A549 (cell line): ENCODE measurements at regions of chr17 and their contacts with region 1.

Region 1: DNA sequence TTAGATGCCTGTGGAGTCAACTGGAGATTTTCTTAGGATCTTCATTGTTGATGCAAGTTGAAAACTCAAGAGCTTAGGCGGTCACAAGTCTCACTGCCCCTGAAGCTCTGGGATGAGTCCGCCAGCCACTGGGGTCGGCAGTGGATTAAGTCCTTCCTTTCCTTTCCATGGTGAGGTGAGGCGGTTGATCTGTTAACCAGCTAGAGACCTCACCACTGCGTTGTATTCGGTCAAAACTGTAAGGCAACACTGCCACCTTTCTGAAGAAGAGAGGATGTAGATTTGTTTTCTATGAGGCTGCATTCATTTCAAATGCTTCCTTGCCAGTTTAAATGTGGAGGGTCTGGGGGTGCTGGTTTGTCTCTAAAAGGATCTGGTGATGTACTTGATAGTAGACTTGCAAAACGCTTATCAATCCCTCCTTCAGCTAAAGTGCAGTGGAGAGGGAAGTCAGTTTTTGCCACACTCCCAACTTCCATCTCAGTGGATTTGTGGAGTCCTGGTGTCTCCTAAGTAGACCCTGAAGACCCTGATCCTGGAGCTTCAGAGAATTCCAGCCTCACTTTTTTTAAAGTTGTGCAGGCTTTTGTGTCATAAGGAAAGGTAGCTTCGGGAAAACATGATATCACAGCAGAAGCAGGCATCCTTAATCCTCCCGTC is 1.7 kb downstream of the MYOCD start:
- DNase-seq: peak; percentile 70 to 90
- ATAC-seq: peak; percentile 75 to 80
- H3K4me3 ChIP-seq: peak overlapping the region; percentile 60
- H3K27ac ChIP-seq: peak overlapping the region; percentile 80 to 81
- H3K4me1 ChIP-seq: peaks cover 29% of the 10 kb centered on the region; the same call in 2 of the 3 replicates
- CTCF ChIP-seq: peak; percentile 92
- EP300 ChIP-seq: no peak
- POLR2A ChIP-seq: no peak
- RAD21 ChIP-seq: peak; percentile 98

Region 2: GRCh38 chr17:12247761-12248160 is 419.7 kb before region 1 on chr17:
- CTCF ChIA-PET with region 1: interaction called, 219 read pairs
- POLR2A ChIA-PET with region 1: no interaction called
- DNase-seq: no peak
- ATAC-seq: no peak
- H3K4me3 ChIP-seq: no peak overlapping the region
- H3K27ac ChIP-seq: no peak overlapping the region
- H3K4me1 ChIP-seq: no peaks in the 10 kb centered on the region
- CTCF ChIP-seq: no peak
- EP300 ChIP-seq: no peak
- POLR2A ChIP-seq: no peak
- RAD21 ChIP-seq: no peak

Region 3: GRCh38 chr17:12402963-12403622 is 264.3 kb before region 1 on chr17:
- CTCF ChIA-PET with region 1: interaction called, 14 read pairs
- POLR2A ChIA-PET with region 1: no interaction called
- DNase-seq: peak; percentile 52 to 91
- ATAC-seq: peak; percentile 95 to 97
- H3K4me3 ChIP-seq: no peak overlapping the region
- H3K27ac ChIP-seq: peak overlapping the region; percentile 79 to 84
- H3K4me1 ChIP-seq: peaks cover 50% of the 10 kb centered on the region
- CTCF ChIP-seq: no peak
- EP300 ChIP-seq: peak; percentile 67 to 68; a peak in 2 of 5 replicates
- POLR2A ChIP-seq: no peak
- RAD21 ChIP-seq: peak; percentile 31 to 54; a peak in 3 of 5 replicates

Region 4: DNA sequence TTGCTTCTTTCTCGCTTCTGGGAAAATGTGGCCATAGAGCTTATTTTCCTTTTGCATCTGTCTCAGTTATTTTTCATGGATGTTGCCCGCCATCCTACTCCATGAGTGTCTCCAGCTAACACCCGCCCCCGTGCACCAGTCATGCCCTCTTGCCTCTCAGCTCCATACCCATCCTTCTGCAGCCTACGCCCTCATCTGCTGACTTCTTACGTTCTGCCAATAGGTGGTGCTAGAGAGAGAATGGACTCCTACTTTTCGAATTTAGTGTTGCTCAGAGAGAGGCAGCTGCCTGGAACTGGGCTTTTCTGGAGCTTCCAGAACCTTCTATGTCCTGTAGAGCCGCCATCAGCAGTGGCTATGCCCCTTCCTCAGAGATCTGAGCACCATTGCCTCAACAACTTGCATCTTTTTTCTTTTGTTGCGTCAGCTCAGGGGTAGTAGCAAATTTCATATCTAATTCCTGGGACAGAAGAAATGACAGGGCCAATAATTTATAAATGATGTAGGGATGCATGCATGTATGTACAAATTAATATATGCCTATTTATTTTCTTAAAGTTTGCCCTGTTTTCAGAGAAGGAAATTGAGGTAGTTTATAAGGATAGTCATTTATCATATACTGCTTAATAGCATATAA is 121.4 kb before region 1 on chr17:
- CTCF ChIA-PET with region 1: interaction called, 94 read pairs
- POLR2A ChIA-PET with region 1: no interaction called
- DNase-seq: peak; percentile 55 to 75
- ATAC-seq: peak; percentile 89 to 97
- H3K4me3 ChIP-seq: no peak overlapping the region
- H3K27ac ChIP-seq: peak overlapping the region in 1 of 2 experiments; percentile 54; a peak in 2 of 6 replicates
- H3K4me1 ChIP-seq: no peaks in the 10 kb centered on the region
- CTCF ChIP-seq: peak; percentile 77
- EP300 ChIP-seq: no peak
- POLR2A ChIP-seq: no peak
- RAD21 ChIP-seq: peak; percentile 74 to 79

Region 5: DNA sequence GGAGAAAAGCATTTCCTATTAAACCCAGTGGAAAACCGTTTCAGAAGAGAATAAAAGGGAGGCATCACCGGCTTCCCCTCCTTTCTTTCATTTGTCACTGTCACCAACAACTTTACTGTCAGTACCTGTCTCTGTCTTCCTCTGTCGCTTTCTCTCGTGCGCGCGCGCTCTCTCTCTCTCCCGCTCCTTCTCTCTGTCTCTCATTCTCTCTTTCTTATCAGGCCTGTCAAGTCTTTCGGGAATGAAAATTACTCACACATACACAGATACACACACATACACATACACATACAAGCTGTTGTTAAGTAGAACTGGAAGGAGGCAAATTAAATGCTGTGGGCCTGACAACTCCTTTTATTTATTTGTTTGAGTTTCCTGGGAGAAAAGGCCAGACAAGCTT is 15.9 kb after region 1 on chr17:
- CTCF ChIA-PET with region 1: interaction called, 13 read pairs
- POLR2A ChIA-PET with region 1: no interaction called
- DNase-seq: no peak
- ATAC-seq: no peak
- H3K4me3 ChIP-seq: no peak overlapping the region
- H3K27ac ChIP-seq: no peak overlapping the region
- H3K4me1 ChIP-seq: no peaks in the 10 kb centered on the region
- CTCF ChIP-seq: no peak
- EP300 ChIP-seq: no peak
- POLR2A ChIP-seq: no peak
- RAD21 ChIP-seq: no peak

Region 6: GRCh38 chr17:12815642-12816141 is 148.3 kb after region 1 on chr17:
- CTCF ChIA-PET with region 1: no interaction called
- POLR2A ChIA-PET with region 1: no interaction called
- DNase-seq: no peak
- ATAC-seq: no peak
- H3K4me3 ChIP-seq: no peak overlapping the region
- H3K27ac ChIP-seq: no peak overlapping the region
- H3K4me1 ChIP-seq: peaks cover 5% of the 10 kb centered on the region; the same call in 1 of the 3 replicates
- CTCF ChIP-seq: no peak
- EP300 ChIP-seq: no peak
- POLR2A ChIP-seq: no peak
- RAD21 ChIP-seq: no peak

Region 7: DNA sequence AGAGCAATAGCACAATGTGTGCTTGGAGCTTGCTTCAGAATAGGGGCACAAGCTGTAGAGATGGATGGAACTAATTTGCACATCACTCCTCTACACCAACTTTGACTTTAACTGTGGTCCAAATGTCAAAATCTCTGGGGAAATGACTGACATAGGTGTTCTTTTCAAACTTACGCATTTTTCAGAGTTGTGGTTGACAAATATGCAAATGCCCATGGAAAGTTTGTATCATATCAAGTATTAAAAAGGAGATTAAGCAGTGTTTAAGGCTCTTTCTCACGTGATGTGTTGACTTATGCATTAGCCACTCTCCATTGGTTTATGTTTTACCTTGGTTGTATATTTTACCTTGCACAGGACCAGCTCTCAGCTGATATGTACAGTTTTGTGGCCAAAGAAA is 273.3 kb after region 1 on chr17:
- CTCF ChIA-PET with region 1: no interaction called
- POLR2A ChIA-PET with region 1: no interaction called
- DNase-seq: no peak
- ATAC-seq: no peak
- H3K4me3 ChIP-seq: no peak overlapping the region
- H3K27ac ChIP-seq: no peak overlapping the region
- H3K4me1 ChIP-seq: no peaks in the 10 kb centered on the region
- CTCF ChIP-seq: no peak
- EP300 ChIP-seq: no peak
- POLR2A ChIP-seq: no peak
- RAD21 ChIP-seq: no peak